ENCODE measurements at regions of chr1 and their contacts with region 1.

Region 1: DNA sequence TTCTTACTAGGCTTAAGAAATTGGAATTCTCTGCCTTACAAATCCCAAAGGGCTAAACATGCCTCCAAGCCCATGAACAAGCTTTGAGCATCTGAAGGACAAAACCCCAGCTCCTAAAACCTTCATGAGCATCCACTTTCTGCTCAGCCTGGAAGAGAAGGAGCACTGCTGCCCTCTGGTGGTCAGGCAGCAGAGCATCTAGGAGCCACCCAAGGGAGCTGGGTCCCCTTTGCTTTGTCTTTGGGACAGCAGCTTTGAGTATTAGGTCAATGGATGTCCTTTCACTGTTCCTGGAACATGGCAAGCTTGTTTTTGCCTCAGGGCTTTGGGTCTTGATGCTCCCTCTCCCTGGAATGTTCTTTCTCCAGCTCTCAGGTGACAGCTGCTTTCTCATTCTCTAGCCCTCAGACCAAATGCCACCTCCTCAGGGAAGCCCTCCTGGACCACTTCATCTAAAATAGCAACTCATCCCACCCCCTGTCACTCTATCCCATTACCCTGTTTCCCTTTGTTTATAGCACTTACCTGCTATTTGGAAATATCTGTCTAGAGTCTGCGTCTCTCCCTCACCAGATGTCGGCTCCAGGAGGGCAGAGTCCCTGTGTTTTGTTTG is 25.7 kb downstream of the RAB7B start:
- DNase-seq: peak; percentile 81
- ATAC-seq: peak; percentile 85
- H3K4me3 Mint-ChIP-seq: no peak overlapping the region
- H3K27ac Mint-ChIP-seq: no peak overlapping the region
- H3K4me1 Mint-ChIP-seq: no peaks in the 10 kb centered on the region
- H3K27me3 Mint-ChIP-seq: peaks cover 5% of the 10 kb centered on the region

Region 2: DNA sequence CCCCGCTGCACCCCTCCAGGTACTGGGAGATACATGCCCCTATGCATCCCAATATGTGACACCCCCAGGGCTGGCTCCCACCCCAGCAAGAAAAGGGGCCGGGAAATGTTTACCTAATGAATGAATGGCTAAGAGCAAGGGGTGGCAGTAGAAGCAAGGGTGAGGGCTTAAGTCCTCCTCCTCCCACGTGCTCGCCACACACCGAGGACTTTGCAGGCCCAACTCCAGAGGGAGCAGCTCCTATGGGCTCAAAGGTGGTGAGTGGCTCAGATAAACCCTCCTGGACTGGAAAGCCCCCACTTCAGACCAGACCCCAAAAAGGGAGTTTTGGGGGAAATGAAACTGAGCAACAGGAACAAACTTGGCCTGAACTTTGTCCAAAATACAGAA is 308.6 kb before region 1 on chr1:
- CTCF ChIA-PET with region 1: interaction called, 10 read pairs
- POLR2A ChIA-PET with region 1: no interaction called
- DNase-seq: no peak
- ATAC-seq: no peak
- H3K4me3 Mint-ChIP-seq: no peak overlapping the region
- H3K27ac Mint-ChIP-seq: no peak overlapping the region
- H3K4me1 Mint-ChIP-seq: peaks cover 25% of the 10 kb centered on the region
- H3K27me3 Mint-ChIP-seq: peaks cover 15% of the 10 kb centered on the region

Region 3: GRCh38 chr1:205791568-205792180 is 185.8 kb before region 1 on chr1:
- CTCF ChIA-PET with region 1: interaction called, 169 read pairs
- POLR2A ChIA-PET with region 1: interaction called, 4 read pairs
- DNase-seq: peak; percentile 74
- ATAC-seq: peak; percentile 93
- H3K4me3 Mint-ChIP-seq: no peak overlapping the region
- H3K27ac Mint-ChIP-seq: no peak overlapping the region
- H3K4me1 Mint-ChIP-seq: no peaks in the 10 kb centered on the region
- H3K27me3 Mint-ChIP-seq: no peaks in the 10 kb centered on the region

Region 4: DNA sequence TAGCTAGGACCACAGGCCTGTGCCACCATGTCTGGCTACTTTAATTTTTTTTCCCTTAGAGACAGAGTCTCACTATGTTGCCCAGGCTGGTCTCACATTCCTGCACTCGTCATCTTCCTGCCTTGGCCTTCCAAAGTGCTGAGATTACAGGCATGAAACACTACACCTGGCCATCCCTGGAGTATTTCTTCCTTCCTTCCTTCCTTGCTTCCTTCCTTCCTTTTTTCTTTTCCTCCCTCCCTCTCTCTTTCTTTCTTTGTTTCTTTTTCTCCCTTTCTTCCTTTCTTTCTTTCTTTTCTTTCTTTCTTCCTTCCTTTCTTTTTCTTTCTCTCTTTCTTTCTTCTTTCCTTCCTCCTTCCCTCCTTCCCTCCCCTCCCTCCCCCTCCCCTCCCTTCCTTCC is 81.2 kb before region 1 on chr1:
- CTCF ChIA-PET with region 1: interaction called, 11 read pairs
- POLR2A ChIA-PET with region 1: no interaction called
- DNase-seq: no peak
- ATAC-seq: no peak
- H3K4me3 Mint-ChIP-seq: no peak overlapping the region
- H3K27ac Mint-ChIP-seq: no peak overlapping the region
- H3K4me1 Mint-ChIP-seq: no peaks in the 10 kb centered on the region
- H3K27me3 Mint-ChIP-seq: peaks cover 17% of the 10 kb centered on the region

Region 5: GRCh38 chr1:205943245-205943644 is 34.3 kb before region 1 on chr1 and contains the start of gene SLC26A9:
- CTCF ChIA-PET with region 1: interaction called, 11 read pairs
- POLR2A ChIA-PET with region 1: no interaction called
- DNase-seq: no peak
- ATAC-seq: no peak
- H3K4me3 Mint-ChIP-seq: no peak within 1 kb of the TSS
- H3K27ac Mint-ChIP-seq: no peak within 1 kb of the TSS
- H3K4me1 Mint-ChIP-seq: no peaks in the 10 kb centered on the region
- H3K27me3 Mint-ChIP-seq: peaks cover 25% of the 10 kb centered on the region
- total RNA-seq, gene SLC26A9: not detected

Region 6: DNA sequence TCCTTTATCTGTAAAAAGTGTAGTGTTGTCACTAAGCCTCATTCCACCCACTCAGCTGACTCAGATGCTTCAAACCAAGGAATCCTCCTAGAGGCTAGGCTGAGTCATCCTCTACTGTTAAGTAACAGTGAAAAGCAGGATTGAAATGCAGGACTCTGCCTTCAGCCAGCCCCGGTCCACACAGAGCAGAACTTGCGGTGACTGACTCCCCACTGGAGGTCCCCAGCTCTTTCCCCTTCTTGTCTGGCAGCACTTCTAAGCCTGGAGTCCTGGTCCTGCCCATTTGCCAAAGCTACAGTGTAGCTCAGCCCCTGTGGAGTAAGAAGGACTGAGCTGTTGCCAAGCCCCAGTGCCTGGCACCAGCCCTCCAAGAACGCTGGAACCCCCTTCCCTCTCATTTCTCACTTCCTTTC is 24.0 kb after region 1 on chr1:
- CTCF ChIA-PET with region 1: interaction called, 20 read pairs
- POLR2A ChIA-PET with region 1: no interaction called
- DNase-seq: no peak
- ATAC-seq: no peak
- H3K4me3 Mint-ChIP-seq: no peak overlapping the region
- H3K27ac Mint-ChIP-seq: no peak overlapping the region
- H3K4me1 Mint-ChIP-seq: no peaks in the 10 kb centered on the region
- H3K27me3 Mint-ChIP-seq: peaks cover 13% of the 10 kb centered on the region

Region 7: GRCh38 chr1:206128196-206128595 is 150.7 kb after region 1 on chr1:
- CTCF ChIA-PET with region 1: no interaction called
- POLR2A ChIA-PET with region 1: no interaction called
- DNase-seq: no peak
- ATAC-seq: no peak
- H3K4me3 Mint-ChIP-seq: no peak overlapping the region
- H3K27ac Mint-ChIP-seq: no peak overlapping the region
- H3K4me1 Mint-ChIP-seq: no peaks in the 10 kb centered on the region
- H3K27me3 Mint-ChIP-seq: peaks cover 25% of the 10 kb centered on the region

Measured in activated CD8-positive, alpha-beta T cell treated with anti-CD3 and anti-CD28 coated beads, Interleukin-2, amount 10 ng/mL, durations not matched to agents 7 days and 5 days (primary cell).